MCF 10A (cell line): ENCODE measurements at regions of chr14 and their contacts with region 1.

Region 1: GRCh38 chr14:67695394-67695949 is at the start of gene RDH11:
- DNase-seq: peak; percentile 95
- H3K4me3 Mint-ChIP-seq: peak within 1 kb of the TSS; percentile 81
- H3K27ac Mint-ChIP-seq: peak within 1 kb of the TSS; percentile 46
- H3K4me1 Mint-ChIP-seq: peaks cover 7% of the 10 kb centered on the region
- H3K27me3 Mint-ChIP-seq: no peaks in the 10 kb centered on the region
- CTCF ChIP-seq: no peak
- total RNA-seq, gene RDH11: 40.9 and 53.5 TPM in 2 replicates

Region 2: GRCh38 chr14:67666750-67667449 is 28.6 kb before region 1 on chr14:
- CTCF ChIA-PET with region 1: interaction called, 8 read pairs
- POLR2A ChIA-PET with region 1: interaction called, 15 read pairs
- intact Hi-C with region 1: no loop called
- DNase-seq: peak; percentile 72
- H3K4me3 Mint-ChIP-seq: no peak overlapping the region
- H3K27ac Mint-ChIP-seq: peak overlapping the region; percentile 27
- H3K4me1 Mint-ChIP-seq: peaks cover 17% of the 10 kb centered on the region
- H3K27me3 Mint-ChIP-seq: no peaks in the 10 kb centered on the region
- CTCF ChIP-seq: peak; percentile 73

Region 3: DNA sequence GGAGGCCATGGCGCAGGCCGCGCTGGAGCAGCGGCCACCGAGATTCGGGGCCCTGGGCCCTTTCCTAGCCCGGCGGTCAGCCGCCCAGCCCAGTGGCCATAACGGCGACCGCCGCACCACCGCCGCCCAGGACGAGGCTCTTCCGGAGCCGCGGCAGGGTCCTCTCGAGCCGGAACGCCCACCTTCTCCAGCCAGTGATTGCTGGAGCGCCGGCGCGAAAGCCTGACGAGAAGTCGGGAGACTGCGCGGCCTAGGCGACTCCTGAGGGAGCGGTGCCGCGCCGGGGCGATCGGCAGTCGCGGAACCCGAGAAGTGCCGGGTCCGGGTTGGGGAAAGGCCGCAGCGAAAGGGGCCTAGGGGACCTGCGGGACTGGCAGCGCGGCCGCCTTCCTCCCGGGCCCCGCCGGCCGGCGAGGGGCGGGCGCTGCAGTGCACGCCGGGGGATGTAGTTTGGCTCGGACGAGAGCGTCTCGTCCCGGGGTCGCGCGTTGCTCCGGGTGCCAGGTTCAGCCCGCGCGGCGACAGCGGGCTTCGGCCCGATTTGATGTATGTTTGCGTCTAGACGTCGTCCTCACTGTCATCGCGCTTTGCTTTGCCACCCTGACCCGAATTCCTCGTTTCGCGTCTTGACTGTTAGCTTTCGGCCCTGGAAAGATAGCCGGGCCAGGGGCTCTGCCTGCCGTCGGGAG is 20.8 kb before region 1 on chr14 and contains the start of gene VTI1B:
- CTCF ChIA-PET with region 1: interaction called, 4 read pairs
- POLR2A ChIA-PET with region 1: interaction called, 85 read pairs
- intact Hi-C with region 1: no loop called
- DNase-seq: peak; percentile 67
- H3K4me3 Mint-ChIP-seq: peak within 1 kb of the TSS; percentile 86
- H3K27ac Mint-ChIP-seq: peak within 1 kb of the TSS; percentile 88
- H3K4me1 Mint-ChIP-seq: peaks cover 27% of the 10 kb centered on the region
- H3K27me3 Mint-ChIP-seq: no peaks in the 10 kb centered on the region
- CTCF ChIP-seq: no peak
- total RNA-seq, gene VTI1B: 57.5 and 84.3 TPM in 2 replicates

Region 4: GRCh38 chr14:67683842-67684241 is 11.6 kb before region 1 on chr14:
- CTCF ChIA-PET with region 1: interaction called, 4 read pairs
- POLR2A ChIA-PET with region 1: interaction called, 22 read pairs
- intact Hi-C with region 1: no loop called
- DNase-seq: no peak
- H3K4me3 Mint-ChIP-seq: no peak overlapping the region
- H3K27ac Mint-ChIP-seq: peak overlapping the region; percentile 4
- H3K4me1 Mint-ChIP-seq: peaks cover 12% of the 10 kb centered on the region
- H3K27me3 Mint-ChIP-seq: no peaks in the 10 kb centered on the region
- CTCF ChIP-seq: no peak

Region 5: GRCh38 chr14:67787673-67788072 is 92.2 kb after region 1 on chr14:
- CTCF ChIA-PET with region 1: no interaction called
- POLR2A ChIA-PET with region 1: no interaction called
- intact Hi-C with region 1: no loop called
- DNase-seq: no peak
- H3K4me3 Mint-ChIP-seq: no peak overlapping the region
- H3K27ac Mint-ChIP-seq: no peak overlapping the region
- H3K4me1 Mint-ChIP-seq: no peaks in the 10 kb centered on the region
- H3K27me3 Mint-ChIP-seq: no peaks in the 10 kb centered on the region
- CTCF ChIP-seq: no peak